Heart right ventricle (tissue), 16 donors: ENCODE measurements at regions of chr2 and their contacts with region 1.

Region 1: DNA sequence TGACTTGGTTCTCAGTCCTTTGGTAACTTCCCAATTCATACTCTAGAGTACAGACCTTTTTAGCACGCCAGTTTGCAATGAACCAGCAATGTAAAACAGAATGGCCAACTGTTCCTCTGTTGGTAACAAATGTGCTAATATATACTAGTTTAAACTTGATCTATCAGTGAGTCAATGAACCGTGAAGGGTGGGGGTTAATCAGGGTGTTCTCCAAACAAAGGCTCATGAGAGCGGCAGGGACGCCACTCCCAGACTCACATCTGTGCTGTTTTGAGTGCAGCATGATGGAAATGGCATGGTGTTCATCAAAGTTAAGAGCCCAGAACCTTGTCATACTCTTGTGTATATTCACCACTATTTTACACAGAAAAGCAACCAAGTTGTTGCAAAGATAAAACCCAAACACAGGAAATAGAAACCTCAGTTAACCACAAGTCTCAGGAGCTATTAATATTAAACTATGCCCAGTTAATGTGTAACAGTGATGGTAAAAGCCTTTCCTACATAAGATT is 70.3 kb downstream of the CERKL start:
- DNase-seq: no peak
- ATAC-seq: no peak
- H3K4me3 ChIP-seq: no peak overlapping the region
- H3K27ac ChIP-seq: no peak overlapping the region
- H3K4me1 ChIP-seq: no peaks in the 10 kb centered on the region
- H3K27me3 ChIP-seq: peaks cover 0 to 35% (median 13%) of the 10 kb centered on the region in 7 donors
- CTCF ChIP-seq: no peak

Region 2: DNA sequence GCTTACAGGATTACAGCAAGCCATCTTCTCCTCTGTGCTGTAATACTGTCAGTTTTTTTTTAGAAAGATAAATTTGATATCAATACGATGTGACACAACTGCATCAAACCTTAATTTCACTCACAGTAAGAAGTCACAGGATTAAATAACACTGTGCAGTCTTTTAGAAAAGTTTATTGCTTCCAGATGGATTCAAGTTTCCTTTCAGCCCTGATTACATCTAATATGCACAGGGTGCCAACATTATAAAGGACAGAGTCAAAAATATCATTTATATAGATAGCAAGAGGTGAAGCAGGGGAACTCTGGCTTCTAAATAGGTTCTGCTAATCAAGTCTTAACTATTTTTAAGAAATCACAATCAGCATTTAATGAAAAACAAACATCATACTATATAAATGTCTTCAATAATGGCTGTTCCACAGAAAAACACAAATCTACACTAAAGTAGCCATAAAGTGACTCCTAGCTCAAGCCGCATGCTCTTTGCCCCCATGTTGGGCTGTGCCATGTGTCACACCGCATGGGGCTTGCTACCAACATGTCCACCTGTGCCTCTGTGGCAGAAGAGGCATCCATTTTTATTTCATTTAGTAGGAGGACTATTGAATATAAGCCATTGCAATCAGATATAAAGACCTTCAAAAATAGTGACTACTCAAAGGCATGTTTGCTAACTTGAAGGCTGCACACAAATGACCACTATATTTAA is 35.3 kb after region 1 on chr2:
- intact Hi-C with region 1: no loop called
- DNase-seq: no peak
- ATAC-seq: no peak
- H3K4me3 ChIP-seq: no peak overlapping the region
- H3K27ac ChIP-seq: no peak overlapping the region
- H3K4me1 ChIP-seq: no peaks in the 10 kb centered on the region
- H3K27me3 ChIP-seq: peaks cover 0 to 23% (median 0%) of the 10 kb centered on the region in 7 donors
- CTCF ChIP-seq: no peak

Region 3: GRCh38 chr2:181697571-181697970 is 110.9 kb after region 1 on chr2:
- intact Hi-C with region 1: loop called in 1 of 10 experiments (anchors 10 kb)
- DNase-seq: no peak
- ATAC-seq: peak in 2 of 8 donors; percentile 29 to 48
- H3K4me3 ChIP-seq: no peak overlapping the region
- H3K27ac ChIP-seq: no peak overlapping the region
- H3K4me1 ChIP-seq: peaks cover 0 to 7% (median 0%) of the 10 kb centered on the region in 9 donors
- H3K27me3 ChIP-seq: peaks cover 0 to 19% (median 0%) of the 10 kb centered on the region in 7 donors
- CTCF ChIP-seq: no peak